B cell (primary cell): ENCODE measurements at regions of chr13 and their contacts with region 1.

Region 1: DNA sequence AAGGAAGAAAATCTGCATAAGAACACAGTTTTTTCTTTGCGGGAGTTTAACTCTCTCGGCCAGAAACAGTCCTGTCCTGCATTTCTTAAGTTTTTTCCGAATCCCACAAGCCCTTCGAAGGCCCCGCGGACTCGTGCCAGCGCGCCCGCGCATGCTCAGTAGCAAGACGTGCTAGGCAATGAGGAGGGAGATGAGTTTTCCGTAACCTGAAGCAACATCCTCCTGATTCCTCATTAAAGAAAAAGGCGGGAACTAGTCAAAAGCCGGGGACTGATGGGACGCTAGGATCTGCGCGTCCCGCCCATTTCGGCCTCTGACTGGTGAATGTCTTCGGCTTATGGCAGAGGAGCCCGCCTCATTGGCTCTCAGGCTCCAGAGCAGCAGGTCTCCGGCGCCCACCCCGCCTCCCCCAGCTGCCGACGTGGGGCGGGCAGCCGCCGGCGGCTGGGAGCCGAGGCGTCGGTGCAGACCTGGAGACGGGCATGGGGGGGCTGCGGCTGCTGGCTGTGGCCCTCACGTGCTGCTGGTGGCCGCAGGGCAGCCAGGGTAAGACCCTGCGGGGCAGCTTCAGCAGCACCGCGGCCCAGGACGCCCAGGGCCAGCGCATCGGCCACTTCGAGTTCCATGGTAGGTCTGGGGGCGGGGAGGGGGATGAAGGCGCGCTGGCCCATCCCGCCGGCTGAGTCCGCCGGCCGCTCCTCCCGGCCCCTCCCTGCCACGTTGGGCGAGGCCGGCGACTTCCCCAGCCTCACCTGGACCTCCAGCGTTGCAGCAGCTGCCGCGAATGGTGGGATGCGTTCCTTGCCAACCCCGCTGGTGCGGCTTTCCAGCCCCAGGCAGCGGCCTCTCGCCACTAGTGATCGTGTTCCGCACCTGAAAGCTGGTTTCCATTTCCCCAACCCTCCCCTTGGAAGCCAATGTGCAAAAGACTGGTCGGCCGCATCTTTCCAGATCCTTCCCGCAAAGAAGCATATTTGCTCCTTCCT is at the start of gene GPR180:
- DNase-seq: peak; percentile 93
- ATAC-seq: peak; percentile 99
- H3K4me3 ChIP-seq: peak within 1 kb of the TSS; percentile 41 to 89 (median 79)
- H3K4me3 Mint-ChIP-seq: peak within 1 kb of the TSS; percentile 92
- H3K27ac ChIP-seq: peak within 1 kb of the TSS; percentile 44 to 67
- H3K27ac Mint-ChIP-seq: peak within 1 kb of the TSS; percentile 94
- H3K4me1 ChIP-seq: peaks cover 7 to 10% of the 10 kb centered on the region in 2 donors
- H3K4me1 Mint-ChIP-seq: peaks cover 24% of the 10 kb centered on the region
- H3K27me3 ChIP-seq: no peaks in the 10 kb centered on the region
- H3K27me3 Mint-ChIP-seq: no peaks in the 10 kb centered on the region
- CTCF ChIP-seq: no peak
- total RNA-seq, gene GPR180: 4.7 and 5.8 TPM in 2 replicates

Region 2: DNA sequence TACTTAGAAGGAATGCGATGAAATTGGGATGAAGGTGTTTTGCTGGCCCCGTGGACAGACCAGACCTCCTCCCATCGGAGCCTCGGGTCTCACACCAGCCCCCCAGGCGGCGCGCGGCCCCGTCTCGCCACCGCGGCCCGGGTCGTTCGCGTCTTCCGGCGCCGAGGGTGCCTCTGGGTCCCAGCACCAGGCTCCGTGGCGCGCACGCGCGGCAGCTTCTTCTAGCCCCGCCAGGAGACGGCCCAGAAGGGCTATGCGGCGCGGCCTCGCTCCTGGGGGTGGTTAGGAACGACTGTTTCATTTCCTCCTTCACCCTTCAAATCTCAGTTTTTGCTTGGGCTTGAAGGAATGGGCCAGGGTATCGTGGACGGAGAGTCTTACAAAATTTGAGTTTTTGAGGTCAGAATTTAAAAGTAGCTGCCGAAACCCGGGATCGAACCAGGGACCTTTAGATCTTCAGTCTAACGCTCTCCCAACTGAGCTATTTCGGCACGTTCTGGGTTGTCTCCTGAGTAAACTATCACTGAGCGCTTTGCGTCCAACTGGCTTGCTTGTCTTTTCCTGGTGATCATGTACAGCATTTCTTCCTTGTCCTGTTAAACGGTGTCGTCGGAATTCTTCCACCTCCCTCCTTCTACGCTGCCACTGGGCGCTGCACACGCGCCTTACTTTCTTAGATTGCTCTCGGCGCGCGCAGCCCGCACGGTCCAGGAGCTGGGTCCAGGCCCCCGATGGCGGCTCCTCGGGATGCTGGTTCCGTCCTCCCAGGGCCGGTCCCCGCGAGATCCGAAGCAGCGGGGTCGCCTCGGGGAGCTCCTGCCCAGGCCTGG is 52.3 kb before region 1 on chr13:
- CTCF ChIA-PET with region 1: interaction called, 3 read pairs
- POLR2A ChIA-PET with region 1: interaction called, 32 read pairs
- intact Hi-C with region 1: loop called (anchors 1 kb)
- DNase-seq: peak; percentile 96
- ATAC-seq: peak; percentile 86
- H3K4me3 ChIP-seq: peak overlapping the region; percentile 64 to 87 (median 77)
- H3K4me3 Mint-ChIP-seq: peak overlapping the region; percentile 96
- H3K27ac ChIP-seq: peak overlapping the region; percentile 87 to 89
- H3K27ac Mint-ChIP-seq: peak overlapping the region; percentile 98
- H3K4me1 ChIP-seq: peaks cover 13 to 23% of the 10 kb centered on the region in 2 donors
- H3K4me1 Mint-ChIP-seq: peaks cover 28% of the 10 kb centered on the region
- H3K27me3 ChIP-seq: no peaks in the 10 kb centered on the region
- H3K27me3 Mint-ChIP-seq: peaks cover 4% of the 10 kb centered on the region
- CTCF ChIP-seq: peak; percentile 10

Region 3: GRCh38 chr13:94620286-94620896 is 18.7 kb after region 1 on chr13:
- CTCF ChIA-PET with region 1: interaction called, 19 read pairs
- POLR2A ChIA-PET with region 1: no interaction called
- intact Hi-C with region 1: no loop called
- DNase-seq: peak; percentile 13
- ATAC-seq: no peak
- H3K4me3 ChIP-seq: no peak overlapping the region
- H3K4me3 Mint-ChIP-seq: no peak overlapping the region
- H3K27ac ChIP-seq: no peak overlapping the region
- H3K27ac Mint-ChIP-seq: no peak overlapping the region
- H3K4me1 ChIP-seq: no peaks in the 10 kb centered on the region
- H3K4me1 Mint-ChIP-seq: no peaks in the 10 kb centered on the region
- H3K27me3 ChIP-seq: no peaks in the 10 kb centered on the region
- H3K27me3 Mint-ChIP-seq: no peaks in the 10 kb centered on the region
- CTCF ChIP-seq: peak; percentile 69

Region 4: GRCh38 chr13:95676762-95677563 is 1075.2 kb after region 1 on chr13 and contains the start of gene DNAJC3:
- CTCF ChIA-PET with region 1: no interaction called
- POLR2A ChIA-PET with region 1: no interaction called
- intact Hi-C with region 1: loop called (anchors 2 kb)
- DNase-seq: peak; percentile 99
- ATAC-seq: peak; percentile 95
- H3K4me3 ChIP-seq: peak within 1 kb of the TSS; percentile 72 to 98 (median 89)
- H3K4me3 Mint-ChIP-seq: peak within 1 kb of the TSS; percentile 95
- H3K27ac ChIP-seq: peak within 1 kb of the TSS; percentile 79 to 91
- H3K27ac Mint-ChIP-seq: peak within 1 kb of the TSS; percentile 94
- H3K4me1 ChIP-seq: peaks cover 22 to 27% of the 10 kb centered on the region in 2 donors
- H3K4me1 Mint-ChIP-seq: peaks cover 48% of the 10 kb centered on the region
- H3K27me3 ChIP-seq: no peaks in the 10 kb centered on the region
- H3K27me3 Mint-ChIP-seq: no peaks in the 10 kb centered on the region
- CTCF ChIP-seq: no peak
- total RNA-seq, gene DNAJC3: 12.1 and 13.0 TPM in 2 replicates